ENCODE measurements at regions of chr10 and their contacts with region 1.

Region 1: DNA sequence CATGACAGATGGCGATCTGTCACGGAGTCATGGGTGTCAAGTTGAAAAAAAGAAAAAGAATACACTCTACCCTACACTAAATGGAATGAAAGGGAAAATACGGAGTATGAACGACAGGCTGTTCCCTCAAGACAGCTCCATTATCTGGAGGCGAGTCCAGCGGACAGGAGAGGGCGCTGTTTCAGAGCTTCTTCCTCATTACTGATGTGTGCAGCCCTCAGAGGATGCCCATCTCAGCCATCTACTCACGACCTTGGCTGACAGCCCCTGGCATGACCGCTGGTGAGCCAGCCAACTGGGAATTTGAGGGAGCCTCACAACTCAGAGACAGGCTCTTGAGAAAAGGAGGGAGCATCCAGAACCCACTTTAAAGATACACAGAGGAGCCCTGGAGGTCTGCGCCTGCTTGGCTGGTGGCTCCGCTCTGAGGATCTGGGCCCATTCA is 49.6 kb upstream of the SMNDC1 start:
- DNase-seq: peak; percentile 77 to 89 (median 84)
- H3K4me3 ChIP-seq: no peak overlapping the region
- H3K27ac ChIP-seq: no peak overlapping the region
- H3K4me1 ChIP-seq: peaks cover 0 to 22% (median 5%) of the 10 kb centered on the region in 4 experiments
- H3K27me3 ChIP-seq: no peaks in the 10 kb centered on the region

Region 2: GRCh38 chr10:110304780-110305421 is 49.4 kb before region 1 on chr10 and contains the start of gene SMNDC1:
- CTCF ChIA-PET with region 1: interaction called, 13 read pairs
- POLR2A ChIA-PET with region 1: no interaction called
- DNase-seq: peak; percentile 97 to 98 (median 98)
- H3K4me3 ChIP-seq: peak within 1 kb of the TSS; percentile 89 to 98 (median 93)
- H3K27ac ChIP-seq: peak within 1 kb of the TSS; percentile 89 to 94
- H3K4me1 ChIP-seq: peaks cover 17 to 38% (median 26%) of the 10 kb centered on the region in 4 experiments
- H3K27me3 ChIP-seq: no peaks in the 10 kb centered on the region

Region 3: DNA sequence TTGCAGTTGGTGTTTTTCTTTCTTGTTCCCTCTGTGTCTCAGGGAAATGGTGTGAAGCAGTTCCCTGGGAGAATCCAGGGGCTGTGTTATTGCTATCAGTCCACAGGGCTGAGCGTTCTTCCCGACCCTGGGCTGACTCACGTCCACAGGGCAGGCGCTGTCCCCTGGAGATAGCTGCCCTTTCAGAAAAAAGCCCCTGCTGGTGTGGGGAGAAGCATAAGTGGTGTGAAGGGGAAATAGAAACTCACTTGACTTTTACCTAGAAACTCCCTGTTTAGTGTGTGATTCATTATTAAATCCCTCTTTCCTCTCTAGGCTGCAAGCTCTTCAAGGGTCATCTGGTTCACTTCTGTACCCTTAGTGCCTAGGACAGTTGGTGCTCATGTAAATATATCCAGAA is 13.7 kb after region 1 on chr10:
- CTCF ChIA-PET with region 1: interaction called, 51 read pairs
- POLR2A ChIA-PET with region 1: no interaction called
- DNase-seq: no peak
- H3K4me3 ChIP-seq: no peak overlapping the region
- H3K27ac ChIP-seq: no peak overlapping the region
- H3K4me1 ChIP-seq: peaks cover 0 to 14% (median 10%) of the 10 kb centered on the region in 4 experiments
- H3K27me3 ChIP-seq: no peaks in the 10 kb centered on the region

Region 4: GRCh38 chr10:110497438-110498086 is 143.2 kb after region 1 on chr10 and contains the start of gene DUSP5:
- CTCF ChIA-PET with region 1: interaction called, 17 read pairs
- POLR2A ChIA-PET with region 1: no interaction called
- DNase-seq: peak; percentile 91 to 96 (median 96)
- H3K4me3 ChIP-seq: peak within 1 kb of the TSS; percentile 53 to 84 (median 71)
- H3K27ac ChIP-seq: no peak within 1 kb of the TSS
- H3K4me1 ChIP-seq: peaks cover 3 to 61% (median 48%) of the 10 kb centered on the region in 4 experiments
- H3K27me3 ChIP-seq: peaks cover 2 to 25% (median 20%) of the 10 kb centered on the region in 5 experiments

Region 5: GRCh38 chr10:110522365-110522988 is 168.1 kb after region 1 on chr10:
- CTCF ChIA-PET with region 1: no interaction called
- POLR2A ChIA-PET with region 1: no interaction called
- DNase-seq: no peak
- H3K4me3 ChIP-seq: no peak overlapping the region
- H3K27ac ChIP-seq: no peak overlapping the region
- H3K4me1 ChIP-seq: peaks cover 0 to 5% (median 0%) of the 10 kb centered on the region in 4 experiments
- H3K27me3 ChIP-seq: no peaks in the 10 kb centered on the region

Region 6: DNA sequence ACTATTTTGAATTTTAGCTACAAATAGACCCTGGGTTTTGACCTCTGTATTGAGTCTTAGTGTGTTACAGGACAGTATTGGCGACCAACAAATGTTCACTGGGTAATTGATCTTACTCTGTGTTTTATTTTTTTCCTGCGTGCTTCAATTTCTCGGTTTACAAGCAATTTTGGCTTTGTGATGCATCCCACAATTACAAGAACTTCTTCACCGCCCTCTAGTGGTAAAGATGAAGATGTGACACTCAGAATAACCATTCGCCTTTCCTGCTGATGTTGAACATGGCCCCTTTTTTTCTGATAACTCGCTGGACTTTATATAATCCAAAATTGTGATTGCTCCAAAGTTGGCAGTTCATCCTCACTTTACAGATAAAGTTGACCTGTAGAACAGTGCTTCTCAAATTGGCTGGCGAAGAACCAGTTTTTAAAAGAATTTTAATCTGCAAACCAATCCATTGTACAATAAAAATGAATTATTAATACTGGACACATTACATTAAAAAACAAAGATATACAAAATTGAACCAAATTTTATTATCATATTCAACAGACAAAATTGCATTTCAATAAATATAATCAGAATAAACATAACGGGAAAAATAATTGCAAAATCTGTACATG is 192.9 kb after region 1 on chr10:
- CTCF ChIA-PET with region 1: interaction called, 64 read pairs
- POLR2A ChIA-PET with region 1: no interaction called
- DNase-seq: peak; percentile 63 to 74 (median 72)
- H3K4me3 ChIP-seq: no peak overlapping the region
- H3K27ac ChIP-seq: no peak overlapping the region
- H3K4me1 ChIP-seq: peaks cover 0 to 5% (median 0%) of the 10 kb centered on the region in 4 experiments
- H3K27me3 ChIP-seq: no peaks in the 10 kb centered on the region